A673 (cell line): ENCODE measurements at regions of chr12 and their contacts with region 1.

Region 1: GRCh38 chr12:104475269-104475668 is 18.5 kb downstream of the CHST11 start:
- DNase-seq: no peak
- H3K4me3 ChIP-seq: no peak overlapping the region
- H3K27ac ChIP-seq: no peak overlapping the region
- H3K4me1 ChIP-seq: no peaks in the 10 kb centered on the region
- H3K27me3 ChIP-seq: no peaks in the 10 kb centered on the region
- CTCF ChIP-seq: no peak

Region 2: DNA sequence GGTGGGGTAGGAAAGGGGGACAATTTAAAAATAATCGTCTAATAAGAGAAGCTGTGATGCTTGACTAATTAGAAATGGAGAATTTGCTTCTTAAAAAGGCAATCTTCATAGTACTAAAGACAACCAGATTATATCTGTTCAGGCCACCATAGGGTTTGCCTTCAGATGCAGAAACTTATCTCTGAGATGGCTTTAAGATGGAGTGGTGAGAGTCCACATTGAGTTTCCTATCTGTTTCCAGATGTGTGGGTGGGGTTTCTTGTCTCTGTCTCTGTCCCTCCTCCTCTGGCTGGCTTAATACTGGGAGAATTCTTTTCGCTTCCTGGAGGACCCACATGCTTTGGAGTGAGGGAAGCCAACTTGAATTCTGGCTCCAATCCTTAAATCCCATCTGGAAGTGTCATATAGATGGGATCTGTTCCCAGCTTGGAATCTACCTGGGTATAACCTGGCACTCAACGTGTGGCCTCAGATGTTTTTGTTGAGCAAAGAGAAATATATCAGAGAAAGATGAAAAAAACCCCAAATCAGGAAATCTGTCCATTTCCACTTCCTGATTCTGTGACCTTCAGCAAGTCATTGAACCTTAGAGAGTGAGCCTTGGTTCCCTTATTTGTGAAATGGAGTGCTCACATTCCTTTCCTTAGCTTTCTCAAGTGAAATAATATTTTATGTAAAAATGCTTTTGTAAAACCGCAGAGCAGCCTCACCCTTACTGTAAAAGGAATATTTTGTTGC is 47.9 kb after region 1 on chr12:
- CTCF ChIA-PET with region 1: no interaction called
- POLR2A ChIA-PET with region 1: no interaction called
- intact Hi-C with region 1: loop called (anchors 1 kb)
- DNase-seq: no peak
- H3K4me3 ChIP-seq: no peak overlapping the region
- H3K27ac ChIP-seq: no peak overlapping the region
- H3K4me1 ChIP-seq: peaks cover 9% of the 10 kb centered on the region
- H3K27me3 ChIP-seq: no peaks in the 10 kb centered on the region
- CTCF ChIP-seq: no peak

Region 3: GRCh38 chr12:104582739-104583138 is 107.5 kb after region 1 on chr12:
- CTCF ChIA-PET with region 1: no interaction called
- POLR2A ChIA-PET with region 1: no interaction called
- intact Hi-C with region 1: no loop called
- DNase-seq: no peak
- H3K4me3 ChIP-seq: no peak overlapping the region
- H3K27ac ChIP-seq: no peak overlapping the region
- H3K4me1 ChIP-seq: no peaks in the 10 kb centered on the region
- H3K27me3 ChIP-seq: no peaks in the 10 kb centered on the region
- CTCF ChIP-seq: no peak